Spleen (tissue), 13 donors: ENCODE measurements at regions of chr9 and their contacts with region 1.

Region 1: DNA sequence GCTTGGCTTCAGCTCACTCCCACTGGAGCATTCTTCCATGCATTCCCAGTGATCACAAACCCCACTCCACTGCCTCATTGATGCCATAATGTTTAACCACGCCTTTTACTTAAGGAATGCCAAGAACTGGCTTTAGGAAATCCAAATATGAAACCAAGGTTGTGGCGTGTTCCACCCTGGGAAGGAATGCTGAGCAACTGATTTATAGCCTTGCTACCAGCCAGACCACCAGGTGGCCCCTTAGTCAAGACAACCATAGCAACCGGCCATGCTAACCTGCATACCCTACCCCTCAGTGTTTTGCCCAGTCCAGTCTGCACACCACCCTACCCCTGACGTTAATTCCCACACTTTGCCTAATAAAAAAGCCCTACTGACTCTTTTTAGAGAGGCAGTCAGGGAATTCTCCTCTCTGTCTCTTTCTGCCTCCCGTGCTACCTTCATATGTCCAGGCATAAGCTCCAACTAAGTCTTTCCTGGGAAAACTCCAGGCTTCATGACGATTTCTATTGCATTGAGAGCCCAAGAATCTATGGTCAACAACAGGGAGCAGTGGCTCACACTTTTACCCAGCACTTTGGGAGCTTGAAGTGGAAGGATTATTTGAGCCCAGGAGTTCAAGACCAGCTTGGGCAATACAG is 27.0 kb upstream of the PRRC2B start:
- DNase-seq: no peak
- H3K4me3 ChIP-seq: no peak overlapping the region
- H3K27ac ChIP-seq: no peak overlapping the region
- H3K4me1 ChIP-seq: peaks cover 0 to 12% (median 6%) of the 10 kb centered on the region in 6 donors
- H3K27me3 ChIP-seq: no peaks in the 10 kb centered on the region
- CTCF ChIP-seq: peak in 5 of 11 experiments; percentile 21 to 44 (median 32)
- POLR2A ChIP-seq: no peak

Region 2: DNA sequence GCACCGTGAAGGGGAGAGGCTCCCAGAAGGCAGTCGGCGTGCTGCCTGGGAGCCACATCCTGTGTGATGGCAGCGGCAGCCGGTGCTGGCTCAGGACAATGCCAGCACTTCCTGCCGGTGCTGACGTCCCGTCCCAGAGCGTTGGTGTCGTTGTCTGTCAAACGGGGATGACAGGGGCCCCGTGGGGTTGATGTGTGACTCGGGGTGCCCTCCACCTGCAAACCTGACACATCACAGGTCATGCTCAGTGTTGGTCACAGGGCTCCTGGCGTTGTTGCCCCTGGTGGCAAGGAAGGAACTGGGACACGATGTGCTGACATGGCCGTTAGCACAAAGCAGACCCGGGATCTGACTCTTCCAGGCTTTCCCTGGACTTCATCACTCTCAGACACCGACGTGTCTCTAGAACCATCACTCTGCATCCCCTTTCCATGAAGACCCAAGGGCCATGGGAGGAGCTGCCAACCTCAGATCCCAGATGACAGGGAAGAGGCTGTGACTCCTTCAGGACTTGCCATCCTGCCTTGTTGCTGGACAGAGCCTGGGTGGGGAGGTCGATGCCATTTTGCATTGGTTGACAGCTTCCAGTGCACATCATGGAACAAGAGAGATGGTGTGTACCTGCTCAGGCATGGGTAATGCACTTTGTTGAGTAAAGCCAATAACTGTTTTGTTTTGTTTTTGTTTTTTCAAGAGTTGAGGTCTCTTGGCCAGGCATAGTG is 55.9 kb before region 1 on chr9:
- intact Hi-C with region 1: no loop called
- DNase-seq: peak; percentile 90
- H3K4me3 ChIP-seq: peak overlapping the region in 1 of 8 donors; percentile 48
- H3K27ac ChIP-seq: peak overlapping the region in 2 of 8 donors; percentile 18 to 22
- H3K4me1 ChIP-seq: peaks cover 0 to 11% (median 10%) of the 10 kb centered on the region in 6 donors
- H3K27me3 ChIP-seq: peaks cover 0 to 13% (median 0%) of the 10 kb centered on the region in 7 donors
- CTCF ChIP-seq: no peak
- POLR2A ChIP-seq: no peak

Region 3: GRCh38 chr9:131481441-131482342 is 114.8 kb after region 1 on chr9:
- intact Hi-C with region 1: loop called (anchors 10 kb)
- DNase-seq: no peak
- H3K4me3 ChIP-seq: no peak overlapping the region
- H3K27ac ChIP-seq: no peak overlapping the region
- H3K4me1 ChIP-seq: no peaks in the 10 kb centered on the region
- H3K27me3 ChIP-seq: no peaks in the 10 kb centered on the region
- CTCF ChIP-seq: no peak
- POLR2A ChIP-seq: no peak